ENCODE measurements at regions of chr11 and their contacts with region 1.

Region 1: GRCh38 chr11:132821014-132821413 is 711.3 kb downstream of the OPCML start:
- DNase-seq: no peak
- ATAC-seq: no peak
- H3K4me3 ChIP-seq: no peak overlapping the region
- H3K4me3 Mint-ChIP-seq: no peak overlapping the region
- H3K27ac ChIP-seq: no peak overlapping the region
- H3K27ac Mint-ChIP-seq: no peak overlapping the region
- H3K4me1 ChIP-seq: no peaks in the 10 kb centered on the region
- H3K4me1 Mint-ChIP-seq: no peaks in the 10 kb centered on the region
- H3K27me3 ChIP-seq: no peaks in the 10 kb centered on the region
- H3K27me3 Mint-ChIP-seq: no peaks in the 10 kb centered on the region
- CTCF ChIP-seq: no peak

Region 2: DNA sequence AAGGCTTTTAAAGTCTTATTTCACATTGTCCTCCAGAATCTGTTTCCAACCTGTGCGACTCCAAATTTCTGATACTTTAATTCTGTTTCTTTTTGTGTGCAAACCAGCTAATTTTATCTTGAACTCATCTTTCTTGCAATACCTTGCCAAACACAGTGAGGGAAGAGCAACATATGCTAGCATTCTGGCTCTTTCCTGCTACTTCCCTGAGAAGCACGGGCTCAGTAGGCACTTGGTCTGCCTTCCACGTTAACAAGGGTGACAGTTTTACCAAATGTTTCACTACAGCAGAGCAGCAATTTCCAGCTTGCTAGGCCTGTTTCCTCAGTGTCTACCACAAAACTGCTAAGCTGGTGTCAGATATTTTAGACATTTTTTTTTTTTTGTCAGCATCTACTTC is 1044.8 kb before region 1 on chr11:
- CTCF ChIA-PET with region 1: no interaction called
- POLR2A ChIA-PET with region 1: no interaction called
- intact Hi-C with region 1: loop called (anchors 5 kb)
- DNase-seq: no peak
- ATAC-seq: no peak
- H3K4me3 ChIP-seq: no peak overlapping the region
- H3K4me3 Mint-ChIP-seq: no peak overlapping the region
- H3K27ac ChIP-seq: no peak overlapping the region
- H3K27ac Mint-ChIP-seq: no peak overlapping the region
- H3K4me1 ChIP-seq: no peaks in the 10 kb centered on the region
- H3K4me1 Mint-ChIP-seq: no peaks in the 10 kb centered on the region
- H3K27me3 ChIP-seq: no peaks in the 10 kb centered on the region
- H3K27me3 Mint-ChIP-seq: no peaks in the 10 kb centered on the region
- CTCF ChIP-seq: no peak

Measured in B cell (primary cell).